PC-3 (cell line): ENCODE measurements at regions of chr5 and their contacts with region 1.

Region 1: GRCh38 chr5:179806250-179807222 is at the start of gene MGAT4B:
- DNase-seq: peak; percentile 74
- ATAC-seq: peak; percentile 74
- H3K4me3 ChIP-seq: peak within 1 kb of the TSS; percentile 86
- H3K27ac ChIP-seq: peak within 1 kb of the TSS; percentile 30; the same call in 1 of the 2 replicates
- H3K4me1 ChIP-seq: peaks cover 31% of the 10 kb centered on the region
- H3K27me3 ChIP-seq: no peaks in the 10 kb centered on the region
- CTCF ChIP-seq: no peak
- total RNA-seq, gene MGAT4B: 88.9 and 113 TPM in 2 replicates

Region 2: DNA sequence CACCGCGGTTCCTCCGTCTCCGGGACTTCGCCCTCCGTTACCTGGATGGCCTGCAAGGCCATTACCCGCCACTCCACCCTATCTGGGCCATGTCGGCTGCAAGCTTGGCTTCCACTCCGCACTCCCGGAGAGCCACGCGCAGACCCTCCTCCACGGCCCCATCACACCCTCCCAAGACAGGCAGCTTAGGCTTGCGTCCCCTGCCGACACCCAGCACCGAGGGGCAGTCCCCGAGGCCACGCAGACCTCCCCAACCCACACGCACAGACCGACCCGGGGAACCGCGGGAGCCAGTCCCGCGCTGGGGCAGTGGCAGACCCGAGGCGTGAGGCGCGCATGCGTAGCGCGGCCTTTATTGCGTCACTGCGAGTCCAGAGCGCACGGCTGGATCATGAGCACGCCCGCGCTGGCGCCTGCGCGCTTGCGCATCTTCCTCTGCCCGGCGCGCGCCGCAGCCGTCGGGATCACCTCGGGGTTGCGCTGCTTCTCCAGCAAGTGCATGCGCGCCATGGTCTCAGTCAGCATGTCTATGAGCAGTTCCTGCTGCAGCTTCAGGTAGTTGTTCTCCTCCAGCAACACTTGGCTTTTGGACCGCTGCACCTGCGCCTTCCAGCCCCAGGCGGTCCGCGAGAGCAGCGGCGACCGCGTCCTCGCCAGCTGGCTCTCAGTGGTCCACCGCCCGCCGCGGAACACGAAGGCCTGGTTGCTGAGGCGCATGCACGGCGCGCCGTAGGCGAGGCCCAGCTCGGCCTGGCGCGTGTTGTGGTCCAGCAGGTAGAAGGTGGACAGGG is 128.1 kb before region 1 on chr5:
- CTCF ChIA-PET with region 1: no interaction called
- POLR2A ChIA-PET with region 1: no interaction called
- intact Hi-C with region 1: no loop called
- DNase-seq: peak; percentile 91
- ATAC-seq: peak; percentile 90
- H3K4me3 ChIP-seq: peak overlapping the region; percentile 95
- H3K27ac ChIP-seq: peak overlapping the region; percentile 57
- H3K4me1 ChIP-seq: peaks cover 14% of the 10 kb centered on the region
- H3K27me3 ChIP-seq: no peaks in the 10 kb centered on the region
- CTCF ChIP-seq: no peak

Region 3: DNA sequence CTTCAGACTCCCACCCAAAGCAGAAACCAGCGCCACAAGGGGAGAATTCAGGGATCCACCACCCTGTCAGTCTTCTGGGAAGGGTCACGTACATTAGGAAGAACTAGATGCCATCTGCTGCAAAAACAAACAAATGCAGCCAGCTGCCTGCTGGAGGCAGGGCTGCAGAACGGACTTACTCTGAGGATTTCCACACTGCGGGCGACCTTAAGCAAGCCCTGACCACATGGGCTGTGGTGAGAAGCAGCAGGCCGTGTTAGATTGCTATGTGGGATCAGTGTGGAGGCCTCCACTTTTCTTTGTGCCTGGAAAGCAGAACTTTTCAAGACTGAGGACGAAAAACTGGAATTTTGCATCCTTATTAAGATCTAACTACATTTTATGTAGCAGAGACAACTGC is 26.2 kb before region 1 on chr5:
- CTCF ChIA-PET with region 1: no interaction called
- POLR2A ChIA-PET with region 1: no interaction called
- intact Hi-C with region 1: no loop called
- DNase-seq: no peak
- ATAC-seq: no peak
- H3K4me3 ChIP-seq: no peak overlapping the region
- H3K27ac ChIP-seq: no peak overlapping the region
- H3K4me1 ChIP-seq: no peaks in the 10 kb centered on the region
- H3K27me3 ChIP-seq: no peaks in the 10 kb centered on the region
- CTCF ChIP-seq: no peak

Region 4: GRCh38 chr5:179821581-179822432 is 15.3 kb after region 1 on chr5:
- CTCF ChIA-PET with region 1: no interaction called
- POLR2A ChIA-PET with region 1: interaction called, 5 read pairs
- intact Hi-C with region 1: loop called (anchors 1 kb)
- DNase-seq: peak; percentile 80
- ATAC-seq: peak; percentile 50
- H3K4me3 ChIP-seq: peak overlapping the region; percentile 93
- H3K27ac ChIP-seq: peak overlapping the region; percentile 96
- H3K4me1 ChIP-seq: peaks cover 41% of the 10 kb centered on the region
- H3K27me3 ChIP-seq: no peaks in the 10 kb centered on the region
- CTCF ChIP-seq: no peak

Region 5: GRCh38 chr5:179858586-179859427 is 52.3 kb after region 1 on chr5 and contains the start of gene MRNIP:
- CTCF ChIA-PET with region 1: no interaction called
- POLR2A ChIA-PET with region 1: no interaction called
- intact Hi-C with region 1: loop called (anchors 5 kb)
- DNase-seq: peak; percentile 88
- ATAC-seq: peak; percentile 94
- H3K4me3 ChIP-seq: peak within 1 kb of the TSS; percentile 95
- H3K27ac ChIP-seq: no peak within 1 kb of the TSS
- H3K4me1 ChIP-seq: no peaks in the 10 kb centered on the region
- H3K27me3 ChIP-seq: no peaks in the 10 kb centered on the region
- CTCF ChIP-seq: no peak
- total RNA-seq, gene MRNIP: 20.2 and 26.1 TPM in 2 replicates